ENCODE measurements at regions of chr4 and their contacts with region 1.

Region 1: DNA sequence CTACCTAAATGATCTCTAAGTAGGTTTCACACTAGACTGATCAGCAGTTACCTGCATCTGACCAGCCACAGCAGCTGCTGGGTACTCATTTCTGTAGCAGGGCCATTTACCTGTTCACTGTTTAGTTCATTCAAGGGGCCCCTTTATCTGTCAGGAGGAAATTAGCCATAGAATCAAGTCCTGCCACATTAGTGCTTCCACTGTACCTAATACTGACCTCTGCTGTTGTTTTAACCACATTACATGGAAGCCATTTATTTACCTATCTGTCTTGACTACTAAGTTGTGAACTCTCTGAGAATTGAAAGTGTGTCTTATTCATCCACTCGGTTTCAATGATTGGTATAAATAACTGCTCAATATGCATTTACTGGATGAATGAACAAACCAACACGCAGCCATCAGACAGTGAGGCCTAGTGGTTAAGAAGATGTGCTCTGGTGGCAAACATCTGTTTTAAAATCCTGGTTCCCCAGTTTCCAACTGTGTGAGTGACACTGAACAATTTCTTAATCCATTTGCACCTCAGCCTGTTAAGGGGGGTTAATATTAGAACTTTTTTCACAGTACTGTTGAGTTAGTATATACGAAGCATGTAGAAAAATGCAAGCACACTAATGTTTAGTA is 30.0 kb upstream of the ANXA5 start:
- DNase-seq: no peak
- H3K4me3 ChIP-seq: no peak overlapping the region
- H3K27ac ChIP-seq: no peak overlapping the region
- H3K4me1 ChIP-seq: no peaks in the 10 kb centered on the region
- H3K27me3 ChIP-seq: no peaks in the 10 kb centered on the region
- CTCF ChIP-seq: peak; percentile 69 to 87 (median 81)
- POLR2A ChIP-seq: no peak

Region 2: DNA sequence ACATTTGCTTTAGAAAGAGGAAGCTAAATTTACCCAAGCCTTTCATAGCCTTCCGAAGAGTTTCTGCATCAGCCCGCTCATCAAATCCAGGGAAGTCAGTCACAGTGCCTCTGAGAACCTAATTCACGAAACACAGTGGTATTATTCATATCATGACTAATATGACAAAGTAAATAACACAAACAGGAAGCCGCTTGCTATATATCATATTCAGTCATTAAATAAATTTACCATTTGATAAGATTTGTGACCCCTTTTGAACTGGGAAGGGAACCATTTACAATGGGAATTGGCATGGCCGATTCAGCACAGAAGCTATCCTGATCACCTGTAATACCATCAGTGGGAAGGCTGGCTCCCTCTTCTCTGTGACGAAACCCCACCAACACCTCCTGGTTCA is 40.5 kb before region 1 on chr4:
- intact Hi-C with region 1: loop called in 1 of 2 experiments (anchors 5 kb)
- DNase-seq: no peak
- H3K4me3 ChIP-seq: no peak overlapping the region
- H3K27ac ChIP-seq: no peak overlapping the region
- H3K4me1 ChIP-seq: peaks cover 27 to 40% of the 10 kb centered on the region in 2 donors
- H3K27me3 ChIP-seq: no peaks in the 10 kb centered on the region
- CTCF ChIP-seq: no peak
- POLR2A ChIP-seq: no peak

Region 3: DNA sequence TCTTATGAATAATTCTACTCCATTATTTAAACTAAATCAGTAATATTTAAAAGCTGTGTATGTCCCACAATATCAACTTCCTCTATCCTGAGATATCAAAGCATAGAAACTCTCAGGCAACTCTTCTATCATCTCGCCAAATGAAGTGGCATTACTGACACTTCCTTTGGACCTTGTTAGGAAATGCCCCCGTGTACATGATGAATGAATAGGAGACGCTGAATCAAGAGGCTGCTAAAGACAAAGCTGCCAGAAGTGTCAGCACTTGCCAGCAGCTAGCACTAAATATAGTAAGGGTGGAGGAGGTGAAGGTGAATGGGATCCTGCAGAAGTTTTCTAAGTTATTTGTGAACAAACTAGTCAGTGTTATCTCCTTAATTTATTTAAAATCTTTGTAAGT is 325.9 kb after region 1 on chr4:
- intact Hi-C with region 1: no loop called
- DNase-seq: no peak
- H3K4me3 ChIP-seq: no peak overlapping the region
- H3K27ac ChIP-seq: no peak overlapping the region
- H3K4me1 ChIP-seq: no peaks in the 10 kb centered on the region
- H3K27me3 ChIP-seq: no peaks in the 10 kb centered on the region
- CTCF ChIP-seq: no peak
- POLR2A ChIP-seq: no peak

Region 4: GRCh38 chr4:122309988-122310626 is 583.4 kb after region 1 on chr4:
- intact Hi-C with region 1: no loop called
- DNase-seq: no peak
- H3K4me3 ChIP-seq: no peak overlapping the region
- H3K27ac ChIP-seq: no peak overlapping the region
- H3K4me1 ChIP-seq: peaks cover 4 to 5% of the 10 kb centered on the region in 2 donors
- H3K27me3 ChIP-seq: no peaks in the 10 kb centered on the region
- CTCF ChIP-seq: peak in 5 of 6 experiments; percentile 26 to 52 (median 42)
- POLR2A ChIP-seq: no peak

Measured in adrenal gland (tissue), 19 donors.